Activated naive CD4-positive, alpha-beta T cell treated with anti-CD3 and anti-CD28 coated beads for 36 hours (primary cell): ENCODE measurements at regions of chr11 and their contacts with region 1.

Region 1: GRCh38 chr11:23765682-23766252 is 731.1 kb upstream of the LUZP2 start:
- DNase-seq: no peak
- H3K4me3 Mint-ChIP-seq: no peak overlapping the region
- H3K27ac Mint-ChIP-seq: no peak overlapping the region
- H3K4me1 Mint-ChIP-seq: no peaks in the 10 kb centered on the region
- H3K27me3 Mint-ChIP-seq: no peaks in the 10 kb centered on the region

Region 2: GRCh38 chr11:23797624-23798419 is 32.1 kb after region 1 on chr11:
- CTCF ChIA-PET with region 1: no interaction called
- intact Hi-C with region 1: loop called (anchors 1 kb)
- DNase-seq: no peak
- H3K4me3 Mint-ChIP-seq: no peak overlapping the region
- H3K27ac Mint-ChIP-seq: no peak overlapping the region
- H3K4me1 Mint-ChIP-seq: no peaks in the 10 kb centered on the region
- H3K27me3 Mint-ChIP-seq: no peaks in the 10 kb centered on the region